Motor neuron (in vitro differentiated cells): ENCODE measurements at regions of chr12 and their contacts with region 1.

Region 1: GRCh38 chr12:94532490-94533422 is 73.1 kb upstream of the CEP83 start:
- ATAC-seq: peak; percentile 71 to 98 (median 76)
- H3K4me3 ChIP-seq: no peak overlapping the region
- H3K27ac ChIP-seq: peak overlapping the region; percentile 6 to 13
- H3K4me1 ChIP-seq: peaks cover 28 to 32% of the 10 kb centered on the region in 2 donors

Region 2: DNA sequence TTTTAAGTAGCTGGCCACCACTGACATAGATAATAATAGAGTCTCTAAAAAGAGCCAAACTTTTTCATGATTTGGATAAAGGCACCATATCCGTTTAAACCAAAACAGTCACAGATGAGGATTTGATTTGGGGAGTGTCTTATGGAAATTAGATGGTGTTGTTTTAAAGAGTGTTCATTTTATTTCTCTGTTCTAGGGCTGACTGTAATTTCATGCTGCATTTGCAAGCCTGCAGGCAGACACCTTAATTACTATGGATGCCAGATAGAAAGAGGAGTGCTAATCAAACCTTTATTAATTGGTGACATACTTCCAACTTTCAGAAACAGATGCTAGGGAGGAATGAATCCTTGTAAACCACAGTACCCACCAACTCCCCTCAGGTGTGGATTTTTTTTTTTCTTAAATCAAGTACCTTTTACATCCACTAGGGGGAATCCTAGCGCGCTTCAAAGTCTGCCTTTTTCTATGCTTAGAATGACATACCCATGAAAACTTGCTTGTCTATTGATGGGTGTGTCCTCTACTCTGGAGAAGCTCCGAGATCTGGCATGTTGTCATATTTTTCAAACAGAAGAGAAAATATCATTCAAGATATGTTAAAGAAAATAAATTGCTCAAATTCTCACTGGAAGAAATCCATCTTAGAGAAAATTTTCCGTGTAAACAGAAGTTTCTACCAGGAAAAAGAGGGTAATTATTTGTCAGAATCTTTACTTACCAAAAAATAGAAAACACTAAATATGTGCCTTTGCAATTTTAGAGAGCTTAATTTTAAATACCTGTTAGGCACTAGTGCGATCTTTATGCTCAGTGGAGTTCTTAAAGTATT is 398.6 kb before region 1 on chr12:
- in situ Hi-C with region 1: loop called in 4 of 9 experiments (anchors 10 to 25 kb)
- ATAC-seq: peak; percentile 44 to 88 (median 60)
- H3K4me3 ChIP-seq: no peak overlapping the region
- H3K27ac ChIP-seq: no peak overlapping the region
- H3K4me1 ChIP-seq: no peaks in the 10 kb centered on the region

Region 3: DNA sequence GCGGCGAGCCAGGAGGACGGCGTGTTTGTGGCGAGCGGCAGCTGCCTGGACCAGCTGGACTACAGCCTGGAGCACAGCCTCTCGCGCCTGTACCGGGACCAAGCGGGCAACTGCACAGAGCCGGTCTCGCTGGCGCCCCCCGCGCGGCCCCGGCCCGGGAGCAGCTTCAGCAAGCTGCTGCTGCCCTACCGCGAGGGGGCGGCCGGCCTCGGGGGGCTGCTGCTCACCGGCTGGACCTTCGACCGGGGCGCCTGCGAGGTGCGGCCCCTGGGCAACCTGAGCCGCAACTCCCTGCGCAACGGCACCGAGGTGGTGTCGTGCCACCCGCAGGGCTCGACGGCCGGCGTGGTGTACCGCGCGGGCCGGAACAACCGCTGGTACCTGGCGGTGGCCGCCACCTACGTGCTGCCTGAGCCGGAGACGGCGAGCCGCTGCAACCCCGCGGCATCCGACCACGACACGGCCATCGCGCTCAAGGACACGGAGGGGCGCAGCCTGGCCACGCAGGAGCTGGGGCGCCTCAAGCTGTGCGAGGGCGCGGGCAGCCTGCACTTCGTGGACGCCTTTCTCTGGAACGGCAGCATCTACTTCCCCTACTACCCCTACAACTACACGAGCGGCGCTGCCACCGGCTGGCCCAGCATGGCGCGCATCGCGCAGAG is 383.5 kb before region 1 on chr12:
- in situ Hi-C with region 1: loop called in 7 of 9 experiments (anchors 10 to 25 kb)
- ATAC-seq: peak; percentile 29 to 58 (median 42)
- H3K4me3 ChIP-seq: peak overlapping the region; percentile 53 to 81 (median 61)
- H3K27ac ChIP-seq: peak overlapping the region; percentile 84 to 86
- H3K4me1 ChIP-seq: peaks cover 35 to 45% of the 10 kb centered on the region in 2 donors